Panc1 (cell line): ENCODE measurements at regions of chr13 and their contacts with region 1.

Region 1: DNA sequence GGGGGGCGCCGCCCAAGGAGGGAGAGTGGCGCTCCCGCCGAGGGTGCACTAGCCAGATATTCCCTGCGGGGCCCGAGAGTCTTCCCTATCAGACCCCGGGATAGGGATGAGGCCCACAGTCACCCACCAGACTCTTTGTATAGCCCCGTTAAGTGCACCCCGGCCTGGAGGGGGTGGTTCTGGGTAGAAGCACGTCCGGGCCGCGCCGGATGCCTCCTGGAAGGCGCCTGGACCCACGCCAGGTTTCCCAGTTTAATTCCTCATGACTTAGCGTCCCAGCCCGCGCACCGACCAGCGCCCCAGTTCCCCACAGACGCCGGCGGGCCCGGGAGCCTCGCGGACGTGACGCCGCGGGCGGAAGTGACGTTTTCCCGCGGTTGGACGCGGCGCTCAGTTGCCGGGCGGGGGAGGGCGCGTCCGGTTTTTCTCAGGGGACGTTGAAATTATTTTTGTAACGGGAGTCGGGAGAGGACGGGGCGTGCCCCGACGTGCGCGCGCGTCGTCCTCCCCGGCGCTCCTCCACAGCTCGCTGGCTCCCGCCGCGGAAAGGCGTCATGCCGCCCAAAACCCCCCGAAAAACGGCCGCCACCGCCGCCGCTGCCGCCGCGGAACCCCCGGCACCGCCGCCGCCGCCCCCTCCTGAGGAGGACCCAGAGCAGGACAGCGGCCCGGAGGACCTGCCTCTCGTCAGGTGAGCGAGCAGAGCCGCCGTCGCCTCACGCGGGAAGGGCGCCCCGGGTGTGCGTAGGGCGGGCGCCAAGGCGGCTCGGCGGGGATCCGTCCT is at the start of gene RB1:
- DNase-seq: no peak
- ATAC-seq: peak; percentile 97
- H3K4me3 ChIP-seq: peak within 1 kb of the TSS; percentile 76 to 79
- H3K27ac ChIP-seq: peak within 1 kb of the TSS; percentile 92
- H3K4me1 ChIP-seq: peaks cover 3% of the 10 kb centered on the region
- H3K27me3 ChIP-seq: no peaks in the 10 kb centered on the region
- CTCF ChIP-seq: no peak
- total RNA-seq, gene RB1: 36.0 TPM

Region 2: DNA sequence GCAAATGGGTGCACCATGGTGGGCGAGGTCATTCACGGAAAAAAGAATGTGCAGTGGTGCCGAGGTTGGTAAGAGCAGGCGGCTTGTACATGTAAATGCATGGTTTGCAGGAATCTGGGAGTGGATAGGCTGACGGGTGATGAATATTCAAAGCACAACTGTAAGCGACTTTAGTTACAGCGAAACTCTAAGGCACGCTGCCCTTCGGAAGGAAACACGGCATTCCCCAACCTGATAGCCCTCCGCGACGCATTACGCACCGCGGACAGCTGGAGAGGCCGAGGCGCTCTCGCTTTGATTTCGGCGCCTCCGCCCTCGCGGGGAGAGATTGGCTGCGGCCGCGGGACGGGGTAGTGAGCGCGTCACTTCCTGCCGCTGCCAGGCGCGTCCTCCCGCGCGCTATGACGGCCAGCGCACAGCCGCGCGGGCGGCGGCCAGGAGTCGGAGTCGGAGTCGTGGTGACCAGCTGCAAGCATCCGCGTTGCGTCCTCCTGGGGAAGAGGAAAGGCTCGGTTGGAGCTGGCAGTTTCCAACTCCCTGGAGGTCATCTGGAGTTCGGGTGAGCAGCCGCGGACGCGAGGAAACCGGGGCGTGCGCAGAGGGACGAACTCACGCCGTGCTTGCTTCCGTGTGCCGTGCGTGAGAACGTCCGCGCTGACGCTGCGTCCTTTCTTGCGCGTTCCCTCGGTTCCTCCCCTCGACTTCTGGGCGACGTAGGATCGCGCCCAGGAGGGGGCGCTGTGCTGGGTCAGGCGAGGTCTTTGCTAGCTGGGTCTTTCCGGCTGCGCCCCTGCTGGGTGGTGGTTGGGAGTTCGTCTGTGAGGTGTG is 266.0 kb before region 1 on chr13 and contains the start of gene NUDT15:
- CTCF ChIA-PET with region 1: no interaction called
- POLR2A ChIA-PET with region 1: no interaction called
- in situ Hi-C with region 1: no loop called
- intact Hi-C with region 1: no loop called
- DNase-seq: peak; percentile 78
- ATAC-seq: peak; percentile 99
- H3K4me3 ChIP-seq: peak within 1 kb of the TSS; percentile 71 to 79
- H3K27ac ChIP-seq: peak within 1 kb of the TSS; percentile 89
- H3K4me1 ChIP-seq: peaks cover 8% of the 10 kb centered on the region; the same call in 1 of the 2 replicates
- H3K27me3 ChIP-seq: no peaks in the 10 kb centered on the region
- CTCF ChIP-seq: peak; percentile 92
- total RNA-seq, gene NUDT15: 18.9 TPM

Region 3: GRCh38 chr13:48094781-48095502 is 208.6 kb before region 1 on chr13 and contains the start of gene MED4:
- CTCF ChIA-PET with region 1: interaction called, 13 read pairs
- POLR2A ChIA-PET with region 1: no interaction called
- in situ Hi-C with region 1: no loop called
- intact Hi-C with region 1: no loop called
- DNase-seq: peak; percentile 63
- ATAC-seq: peak; percentile 99
- H3K4me3 ChIP-seq: peak within 1 kb of the TSS; percentile 86 to 94
- H3K27ac ChIP-seq: peak within 1 kb of the TSS; percentile 80
- H3K4me1 ChIP-seq: peaks cover 4% of the 10 kb centered on the region
- H3K27me3 ChIP-seq: no peaks in the 10 kb centered on the region
- CTCF ChIP-seq: peak; percentile 98
- total RNA-seq, gene MED4: 26.5 TPM

Region 4: GRCh38 chr13:49046002-49046401 is 742.5 kb after region 1 on chr13:
- CTCF ChIA-PET with region 1: no interaction called
- POLR2A ChIA-PET with region 1: interaction called, 16 read pairs
- in situ Hi-C with region 1: no loop called
- intact Hi-C with region 1: no loop called
- DNase-seq: no peak
- ATAC-seq: no peak
- H3K4me3 ChIP-seq: no peak overlapping the region
- H3K27ac ChIP-seq: no peak overlapping the region
- H3K4me1 ChIP-seq: no peaks in the 10 kb centered on the region
- H3K27me3 ChIP-seq: no peaks in the 10 kb centered on the region
- CTCF ChIP-seq: no peak